ENCODE measurements at regions of chr1 and their contacts with region 1.

Region 1: GRCh38 chr1:15426492-15427279 is 11.6 kb upstream of the CTRC start:
- DNase-seq: no peak
- CTCF ChIP-seq: no peak

Region 2: DNA sequence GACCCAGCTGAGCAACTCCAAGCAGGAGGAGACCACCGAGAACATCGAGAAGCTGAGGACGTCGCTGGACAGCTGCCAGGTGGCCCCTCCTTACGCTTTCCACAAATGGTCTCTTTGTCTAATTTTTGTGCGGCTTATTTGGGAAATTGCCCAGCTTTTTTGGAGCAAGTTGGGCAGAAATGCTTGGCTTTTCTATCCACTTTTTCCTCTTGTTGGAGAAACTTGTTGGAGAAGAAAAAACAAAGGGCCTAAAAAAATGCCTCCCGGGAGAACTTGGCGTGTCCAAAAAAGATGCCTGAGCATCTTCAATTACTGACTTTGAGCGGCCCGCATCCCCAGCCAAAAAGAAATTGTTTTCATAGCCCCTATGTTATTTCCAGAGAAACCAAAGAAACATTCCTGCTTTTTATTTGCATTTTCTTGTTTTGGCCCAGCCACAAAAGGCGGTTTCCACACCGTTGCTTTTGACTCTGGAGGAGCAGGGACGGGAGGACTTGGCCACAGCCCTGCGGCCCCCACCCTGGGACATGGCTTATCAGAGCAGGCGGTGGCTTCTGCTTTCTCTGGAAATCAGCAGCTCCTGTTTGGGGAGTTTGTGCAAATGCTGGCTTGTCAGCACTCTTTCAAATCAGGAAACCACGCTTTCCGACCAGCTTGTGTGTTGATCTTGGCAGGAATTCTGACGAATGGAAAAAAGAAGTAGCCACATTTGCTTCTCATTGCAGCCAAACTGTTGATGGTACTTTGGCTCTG is 98.2 kb before region 1 on chr1:
- in situ Hi-C with region 1: loop called (anchors 5 kb)
- DNase-seq: no peak
- CTCF ChIP-seq: no peak

Region 3: GRCh38 chr1:15341634-15342407 is 84.9 kb before region 1 on chr1:
- in situ Hi-C with region 1: no loop called
- DNase-seq: no peak
- CTCF ChIP-seq: no peak

Measured in GM13976 (cell line).